ENCODE measurements at regions of chr12 and their contacts with region 1.

Region 1: DNA sequence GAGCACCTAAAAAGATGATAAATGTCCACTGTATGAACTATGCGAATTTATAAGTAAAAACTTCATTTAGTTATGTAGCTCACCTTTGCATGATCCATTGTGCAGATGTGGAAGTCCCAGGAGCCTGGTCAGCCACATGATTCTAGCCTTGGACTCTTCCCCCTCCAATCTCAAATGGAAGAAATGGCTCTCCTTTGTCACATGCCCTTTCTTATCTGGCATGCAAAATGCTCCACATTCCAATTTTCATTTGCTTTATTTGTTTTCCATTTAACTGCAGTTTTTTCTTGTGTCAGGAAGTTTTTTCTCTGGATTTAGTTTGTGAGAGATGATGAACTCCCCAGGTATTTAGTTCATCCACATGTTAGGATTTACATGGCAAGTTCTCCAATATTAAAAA is 73.8 kb downstream of the DYRK2 start:
- DNase-seq: no peak

Region 2: DNA sequence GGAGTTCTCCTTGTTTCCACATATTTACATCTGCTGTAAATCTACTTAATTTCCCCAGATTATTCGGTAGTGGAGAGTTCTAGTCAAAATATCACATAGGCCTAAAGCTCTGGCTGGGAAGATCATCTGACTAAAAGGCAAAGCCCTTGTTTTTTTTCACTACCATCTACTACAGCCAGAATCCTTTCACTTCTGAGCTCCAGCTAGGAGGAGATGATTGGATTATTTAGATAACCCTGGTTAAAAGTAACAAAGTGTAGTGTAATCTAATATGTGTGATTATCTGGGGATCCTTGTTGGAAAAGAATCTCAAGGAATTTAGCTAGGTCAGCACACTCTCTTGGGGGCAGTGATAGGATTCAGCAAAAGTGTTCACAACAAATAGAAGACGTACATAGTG is 51.6 kb after region 1 on chr12:
- intact Hi-C with region 1: loop called in 1 of 2 experiments (anchors 1 kb)
- DNase-seq: no peak

Region 3: DNA sequence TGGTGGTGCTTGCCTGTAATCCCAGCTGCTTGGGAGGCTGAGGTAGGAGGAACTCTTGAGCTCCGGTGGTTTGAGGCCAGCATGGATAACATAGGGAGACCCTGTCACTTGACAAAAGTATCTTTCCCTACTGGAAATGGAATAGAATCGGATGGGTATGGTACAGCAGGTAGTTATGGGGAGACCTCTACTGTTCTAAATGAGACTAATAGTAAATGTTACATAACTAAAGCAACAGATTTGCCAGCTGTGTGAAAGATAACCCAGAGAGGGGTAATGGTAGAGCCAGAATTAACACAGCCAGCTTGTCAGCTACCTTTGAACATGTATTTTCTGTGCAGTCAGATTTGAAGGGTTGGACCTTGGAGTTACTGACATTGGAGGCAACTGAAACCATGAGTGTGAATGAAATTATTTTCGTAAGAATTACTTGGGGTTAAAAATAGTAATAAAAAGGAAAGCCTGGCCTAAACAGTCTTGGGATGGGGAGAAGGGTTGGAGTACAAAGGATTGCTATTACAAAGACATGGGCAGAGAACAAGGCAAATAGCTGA is 942.8 kb after region 1 on chr12:
- intact Hi-C with region 1: no loop called
- DNase-seq: no peak

Measured in posterior vena cava (tissue), 2 donors.